ENCODE measurements at regions of chr22 and their contacts with region 1.

Region 1: GRCh38 chr22:31119026-31119717 is 3.6 kb upstream of the INPP5J start:
- DNase-seq: peak in 1 of 2 donors; percentile 2
- H3K4me3 ChIP-seq: no peak overlapping the region
- H3K27ac ChIP-seq: no peak overlapping the region
- H3K4me1 ChIP-seq: peaks cover 12 to 13% of the 10 kb centered on the region in 2 donors
- H3K27me3 ChIP-seq: no peaks in the 10 kb centered on the region
- CTCF ChIP-seq: no peak
- POLR2A ChIP-seq: no peak

Region 2: DNA sequence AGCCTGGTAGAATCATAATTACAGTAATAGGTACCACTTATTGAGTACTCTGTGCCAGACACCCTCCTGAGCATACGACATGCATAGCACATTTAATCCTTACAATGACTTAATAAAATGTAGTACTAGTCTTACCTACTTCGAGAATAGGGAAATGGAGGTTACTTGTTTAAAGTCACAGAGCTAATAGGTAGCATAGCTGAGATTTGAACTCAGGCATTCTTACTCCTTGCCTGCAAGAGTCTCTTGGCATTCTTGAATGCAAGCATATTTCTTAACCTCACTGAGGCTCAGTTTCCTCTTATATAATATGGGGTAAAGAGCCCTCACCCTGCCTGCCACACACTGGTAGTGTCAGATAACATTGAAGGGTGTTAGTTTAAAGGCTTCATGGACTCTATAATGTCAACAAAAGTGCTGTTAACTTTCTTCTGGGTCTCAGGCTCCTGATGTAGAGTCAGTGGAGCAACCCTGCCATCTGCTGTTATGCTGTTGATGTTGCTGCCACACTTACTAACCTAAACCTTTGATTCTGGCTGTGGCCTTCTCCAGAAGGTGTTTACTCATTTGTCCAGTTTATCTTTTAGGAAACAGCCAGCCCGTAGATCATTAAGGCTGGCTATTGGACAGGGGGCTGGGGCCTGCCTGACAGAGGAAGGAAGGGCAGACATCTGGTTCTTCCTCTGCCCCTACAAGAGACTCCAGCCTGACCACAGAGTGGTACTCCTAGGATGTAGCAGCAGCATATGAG is 111.9 kb after region 1 on chr22:
- intact Hi-C with region 1: loop called (anchors 10 kb)
- DNase-seq: peak; percentile 68 to 70
- H3K4me3 ChIP-seq: no peak overlapping the region
- H3K27ac ChIP-seq: peak overlapping the region; percentile 73 to 88 (median 76)
- H3K4me1 ChIP-seq: peaks cover 20 to 44% of the 10 kb centered on the region in 2 donors
- H3K27me3 ChIP-seq: no peaks in the 10 kb centered on the region
- CTCF ChIP-seq: peak; percentile 38 to 91 (median 83)
- POLR2A ChIP-seq: no peak